ENCODE measurements at regions of chr3 and their contacts with region 1.

Region 1: GRCh38 chr3:151156618-151157216 is 46.3 kb downstream of the GPR171 start:
- DNase-seq: peak; percentile 23
- H3K4me3 ChIP-seq: no peak overlapping the region
- H3K27ac ChIP-seq: no peak overlapping the region
- H3K27me3 ChIP-seq: no peaks in the 10 kb centered on the region
- CTCF ChIP-seq: peak; percentile 63

Region 2: GRCh38 chr3:151146071-151146730 is 10.5 kb before region 1 on chr3:
- CTCF ChIA-PET with region 1: interaction called, 13 read pairs
- POLR2A ChIA-PET with region 1: no interaction called
- DNase-seq: peak; percentile 36
- H3K4me3 ChIP-seq: no peak overlapping the region
- H3K27ac ChIP-seq: no peak overlapping the region
- H3K27me3 ChIP-seq: peaks cover 5% of the 10 kb centered on the region
- CTCF ChIP-seq: peak; percentile 94

Region 3: DNA sequence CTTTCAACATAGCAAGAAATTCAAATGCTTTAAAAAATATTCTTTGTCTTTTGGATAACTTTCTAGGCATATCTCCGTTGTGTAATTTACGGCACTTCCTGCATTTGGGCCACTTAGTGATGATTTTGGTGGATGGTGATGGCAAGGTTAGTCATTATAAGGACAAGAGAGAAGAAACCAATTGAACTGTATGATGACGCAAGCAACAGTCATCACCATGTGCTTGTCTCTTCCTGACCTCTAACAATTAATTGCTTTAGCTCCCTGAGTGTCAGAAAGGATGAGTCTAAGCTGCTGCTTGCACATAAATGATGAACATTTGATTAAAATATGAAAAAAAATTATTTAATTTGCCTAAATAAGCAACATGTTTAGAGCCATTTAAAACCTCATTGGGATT is 239.1 kb after region 1 on chr3:
- CTCF ChIA-PET with region 1: no interaction called
- POLR2A ChIA-PET with region 1: no interaction called
- DNase-seq: no peak
- H3K4me3 ChIP-seq: no peak overlapping the region
- H3K27ac ChIP-seq: no peak overlapping the region
- H3K27me3 ChIP-seq: no peaks in the 10 kb centered on the region
- CTCF ChIP-seq: no peak

Region 4: DNA sequence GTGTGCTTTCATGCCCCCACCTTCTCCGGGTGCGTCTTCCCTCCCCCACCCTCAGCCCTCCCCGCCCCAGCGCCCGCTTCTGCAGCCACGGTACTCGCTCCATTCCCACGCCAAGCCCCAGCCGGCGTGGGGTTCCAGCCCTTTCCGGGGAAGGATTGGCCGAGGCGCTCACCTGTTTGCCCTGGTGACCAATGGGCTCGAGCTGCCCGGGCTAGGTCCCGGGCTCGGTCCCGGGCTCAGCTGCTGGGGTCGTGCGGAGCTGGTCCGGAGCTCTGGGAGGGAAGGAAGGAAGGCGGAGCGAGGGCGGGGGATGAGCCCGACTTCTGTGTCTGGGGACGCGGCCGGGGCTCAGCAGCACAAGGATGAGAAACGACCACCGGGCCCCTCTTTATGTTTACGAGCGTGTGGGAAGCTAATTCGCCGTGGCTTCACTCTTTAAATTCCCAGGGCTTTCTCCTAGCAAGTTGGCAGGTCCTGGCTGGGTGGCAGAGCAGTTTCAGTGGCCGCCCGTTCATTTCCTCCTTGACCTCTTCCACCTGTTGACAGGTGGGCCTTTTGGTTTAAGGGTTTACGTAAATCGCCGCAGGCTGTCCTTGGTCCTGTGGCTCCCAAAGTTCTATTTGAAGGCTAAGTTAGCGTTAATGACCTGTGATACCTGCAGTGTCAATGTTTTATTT is 304.2 kb after region 1 on chr3 and contains the start of gene IGSF10:
- CTCF ChIA-PET with region 1: no interaction called
- POLR2A ChIA-PET with region 1: no interaction called
- DNase-seq: no peak
- H3K4me3 ChIP-seq: peak within 1 kb of the TSS; percentile 46
- H3K27ac ChIP-seq: no peak within 1 kb of the TSS
- H3K27me3 ChIP-seq: peaks cover 13% of the 10 kb centered on the region
- CTCF ChIP-seq: no peak
- polyA plus RNA-seq, gene IGSF10: 0.02 TPM in 2 replicates